ENCODE measurements at regions of chr5 and their contacts with region 1.

Region 1: GRCh38 chr5:176361437-176362232 is at the start of gene KIAA1191:
- DNase-seq: peak; percentile 99
- ATAC-seq: peak; percentile 96
- total RNA-seq, gene KIAA1191: 76.0 TPM

Region 2: GRCh38 chr5:176388444-176389134 is 27.0 kb after region 1 on chr5 and contains the starts of genes HIGD2A and NOP16:
- intact Hi-C with region 1: loop called (anchors 2 kb)
- DNase-seq: peak; percentile 100
- ATAC-seq: peak; percentile 97
- total RNA-seq, gene HIGD2A: 218 TPM
- total RNA-seq, gene NOP16: 22.6 TPM

Region 3: DNA sequence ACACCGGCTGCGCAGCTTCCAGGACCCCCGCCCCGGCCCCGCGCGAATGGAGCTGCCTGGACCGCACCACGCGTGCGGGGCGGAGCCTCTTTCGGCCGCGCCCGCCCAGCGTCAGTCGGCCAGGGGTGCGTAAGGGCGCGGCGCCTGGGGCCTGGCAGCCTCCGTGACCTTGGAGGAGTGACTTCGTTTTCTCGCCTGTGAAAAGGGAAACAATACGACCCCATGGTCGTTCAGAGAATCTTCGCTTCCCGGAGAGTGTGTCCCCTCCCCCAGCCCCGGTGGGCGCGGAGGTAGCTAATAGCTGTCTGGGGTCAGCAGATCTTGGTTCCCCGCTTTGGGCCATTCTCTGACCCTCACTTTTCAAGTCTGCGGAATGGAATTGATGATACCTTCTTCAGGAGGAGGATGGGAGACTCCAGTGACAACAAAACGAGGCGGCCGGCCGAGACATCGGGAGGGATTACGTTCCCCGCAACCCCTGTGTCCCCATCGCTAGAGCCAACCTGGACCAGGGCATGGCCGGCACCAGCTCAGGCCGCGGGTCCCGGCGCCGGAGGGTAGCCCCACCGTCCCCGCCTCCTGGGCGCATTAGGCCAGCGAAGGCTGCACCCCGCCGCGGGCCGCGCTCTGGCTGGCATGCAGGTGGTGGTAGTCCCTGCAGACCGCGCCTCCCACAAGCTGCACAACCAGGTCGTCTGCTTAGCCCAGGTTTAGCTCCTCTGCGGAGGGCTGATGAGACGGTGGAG is 182.0 kb after region 1 on chr5:
- intact Hi-C with region 1: loop called (anchors 5 kb)
- DNase-seq: peak; percentile 92
- ATAC-seq: peak; percentile 93

Measured in Right ventricle myocardium inferior (tissue), 1 donor.